ENCODE measurements at regions of chr2 and their contacts with region 1.

Region 1: DNA sequence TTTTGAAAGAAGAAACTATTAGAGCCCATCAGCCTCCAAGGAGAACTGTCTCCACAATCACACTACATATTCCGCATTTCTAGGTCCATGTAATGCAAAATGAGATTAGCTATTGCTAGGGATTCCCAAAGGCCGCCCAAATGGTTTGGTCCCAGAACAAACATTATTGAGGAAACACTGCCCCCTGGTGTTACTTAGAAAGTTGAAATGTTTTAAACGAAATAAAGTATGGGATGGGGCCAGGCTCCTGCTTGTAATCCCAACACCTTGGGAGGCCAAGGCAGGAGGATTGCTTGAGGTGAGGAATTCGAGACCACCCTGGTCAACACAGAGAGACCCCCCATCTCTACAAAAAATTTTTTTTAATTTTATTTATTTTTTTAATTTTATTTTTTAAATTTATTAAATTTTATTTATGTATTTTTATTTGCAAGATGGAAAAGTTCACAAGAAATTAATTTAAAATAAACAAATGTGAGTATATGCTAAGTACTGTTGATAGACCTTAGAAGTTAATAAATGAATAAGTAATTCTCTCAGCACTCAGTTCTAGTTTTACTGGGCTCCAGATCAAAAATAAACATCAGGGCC is 5.5 kb downstream of the NHEJ1 start:
- DNase-seq: no peak
- H3K4me3 ChIP-seq: no peak overlapping the region
- CTCF ChIP-seq: peak; percentile 34

Region 2: DNA sequence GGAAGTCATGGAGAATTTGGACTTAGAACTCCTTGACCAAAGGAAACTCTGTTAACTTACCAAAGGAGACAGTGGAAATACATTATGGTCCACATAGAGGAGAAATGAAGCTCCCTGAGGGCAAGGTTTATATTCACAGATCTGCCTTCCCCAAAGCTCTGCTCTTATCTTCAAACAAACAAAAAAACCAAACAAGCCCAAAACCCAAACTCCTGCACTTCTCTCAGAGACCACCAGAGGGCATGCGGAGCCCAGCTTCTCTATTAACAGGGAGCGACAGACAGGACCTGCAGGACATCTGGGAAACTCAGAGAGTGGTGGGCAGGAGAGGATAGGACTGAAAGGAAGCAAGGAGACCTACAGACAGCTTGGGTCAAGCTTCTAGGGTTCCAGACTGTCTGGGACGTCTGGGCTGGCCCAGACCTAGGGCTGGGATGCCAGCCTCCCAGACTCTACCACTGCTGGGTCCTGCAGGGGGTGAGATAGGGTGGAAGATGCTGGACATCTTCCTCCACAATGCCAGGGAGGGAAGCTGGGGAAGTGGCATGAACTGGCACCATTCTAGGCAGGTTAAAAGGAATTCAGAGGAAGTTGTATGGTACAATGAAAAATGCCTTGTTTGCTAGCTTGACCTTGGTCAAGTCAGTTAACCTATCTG is 278.5 kb before region 1 on chr2:
- CTCF ChIA-PET with region 1: interaction called, 44 read pairs
- POLR2A ChIA-PET with region 1: no interaction called
- DNase-seq: no peak
- H3K4me3 ChIP-seq: no peak overlapping the region
- CTCF ChIP-seq: peak; percentile 86

Region 3: DNA sequence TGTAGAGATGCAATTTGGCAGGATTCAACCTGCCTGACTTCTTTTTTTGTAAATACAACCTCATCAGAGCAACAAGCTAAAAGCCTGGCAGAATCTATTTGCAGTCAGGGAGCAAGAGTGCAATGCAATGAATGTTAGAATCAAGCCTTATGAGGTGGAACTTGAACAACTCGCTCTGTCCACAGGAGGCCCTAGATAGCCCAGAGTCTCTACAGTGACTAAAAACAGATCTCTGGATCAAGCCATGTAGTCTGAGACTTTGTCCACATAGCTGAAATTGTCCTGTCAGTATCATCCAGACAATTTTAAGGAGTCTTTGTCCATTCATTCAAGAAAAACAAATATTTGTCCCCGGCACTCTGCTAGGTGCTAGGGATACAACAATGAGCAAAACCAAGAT is 227.7 kb before region 1 on chr2:
- CTCF ChIA-PET with region 1: no interaction called
- POLR2A ChIA-PET with region 1: no interaction called
- DNase-seq: no peak
- H3K4me3 ChIP-seq: no peak overlapping the region
- CTCF ChIP-seq: no peak

Region 4: GRCh38 chr2:219002395-219003266 is 152.5 kb before region 1 on chr2:
- CTCF ChIA-PET with region 1: interaction called, 135 read pairs
- POLR2A ChIA-PET with region 1: no interaction called
- DNase-seq: no peak
- H3K4me3 ChIP-seq: no peak overlapping the region
- CTCF ChIP-seq: peak; percentile 53

Region 5: DNA sequence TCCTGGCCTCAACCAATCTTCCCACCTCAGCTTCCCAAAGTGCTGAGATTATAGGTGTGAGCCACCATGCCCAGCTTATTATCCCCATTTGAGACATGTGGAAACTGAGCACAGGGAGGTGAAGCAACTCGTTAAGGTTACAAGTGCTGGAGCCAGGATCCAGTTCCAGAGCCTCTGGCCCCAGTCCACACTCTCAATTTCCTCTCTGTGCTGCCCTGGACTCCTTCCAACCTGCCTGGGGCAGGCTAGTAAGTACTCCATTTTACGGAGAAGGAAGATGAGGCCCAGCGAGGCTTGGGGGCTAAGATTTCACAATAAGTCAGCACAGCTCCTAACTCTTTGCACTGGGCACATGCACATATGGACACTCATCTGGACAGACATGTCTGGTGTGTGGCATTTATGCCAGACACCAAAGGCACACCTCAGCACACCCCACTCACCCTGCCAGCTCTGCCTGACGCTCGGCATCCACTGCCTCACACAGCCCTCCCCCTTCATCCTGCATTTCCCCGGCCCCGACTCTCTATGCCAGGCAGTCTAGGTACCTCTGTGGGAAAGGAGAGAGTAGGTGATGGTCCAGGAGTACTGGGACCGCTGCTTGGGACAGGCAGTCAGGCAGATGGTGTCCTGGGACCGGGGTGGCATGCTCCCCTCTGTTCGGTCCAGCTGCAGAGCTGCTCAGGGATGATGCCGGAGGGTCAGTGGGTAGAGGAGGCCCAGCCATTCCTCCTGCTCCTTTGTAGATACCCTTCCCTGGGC is 134.4 kb before region 1 on chr2:
- CTCF ChIA-PET with region 1: interaction called, 366 read pairs
- POLR2A ChIA-PET with region 1: no interaction called
- DNase-seq: no peak
- H3K4me3 ChIP-seq: no peak overlapping the region
- CTCF ChIP-seq: no peak

Region 6: GRCh38 chr2:219125225-219125885 is 29.8 kb before region 1 on chr2:
- CTCF ChIA-PET with region 1: interaction called, 58 read pairs
- POLR2A ChIA-PET with region 1: no interaction called
- DNase-seq: no peak
- H3K4me3 ChIP-seq: no peak overlapping the region
- CTCF ChIP-seq: no peak

Region 7: DNA sequence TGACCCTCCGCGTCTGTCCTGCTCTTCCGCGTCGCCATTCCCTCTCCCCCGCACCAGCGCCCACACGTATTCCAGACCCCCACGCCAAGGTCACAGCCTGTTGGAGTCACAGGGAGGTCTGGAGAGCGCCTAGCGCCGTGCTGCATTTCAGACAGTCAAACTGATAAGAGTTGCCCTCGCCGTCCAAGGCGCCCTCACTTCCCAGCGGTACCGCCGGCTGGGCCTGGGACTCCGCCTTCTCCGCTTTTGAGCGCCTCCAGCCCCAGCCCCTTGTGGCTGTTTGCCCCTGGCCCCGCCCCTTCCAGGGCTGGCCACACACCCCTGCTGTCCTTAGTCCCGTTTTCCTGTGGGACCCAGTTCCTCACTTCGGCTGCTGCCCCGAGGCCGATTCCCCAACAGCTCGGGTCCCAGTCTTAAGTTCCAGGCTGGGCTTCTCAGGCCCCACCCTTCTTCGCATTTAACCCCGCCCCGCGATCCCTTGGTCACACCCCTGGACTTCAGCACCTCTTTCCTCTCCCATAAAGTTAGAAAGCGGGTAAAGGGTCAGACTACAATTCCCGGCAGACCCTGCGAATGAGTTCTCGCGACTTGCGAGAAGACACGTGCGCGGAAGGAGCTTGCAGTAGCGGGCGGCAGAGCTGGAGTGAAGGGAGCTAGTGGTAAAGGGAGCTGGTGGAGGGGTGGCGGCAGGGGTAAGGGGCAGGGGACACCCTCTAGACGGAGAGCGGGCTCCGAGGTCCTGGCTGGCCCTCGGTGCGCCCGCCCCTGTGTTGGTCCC is 343.3 kb after region 1 on chr2 and contains the start of gene GMPPA:
- CTCF ChIA-PET with region 1: no interaction called
- POLR2A ChIA-PET with region 1: no interaction called
- DNase-seq: peak; percentile 95
- H3K4me3 ChIP-seq: peak within 1 kb of the TSS; percentile 75
- CTCF ChIP-seq: peak; percentile 9

Region 8: GRCh38 chr2:219844401-219845091 is 689.4 kb after region 1 on chr2:
- CTCF ChIA-PET with region 1: no interaction called
- POLR2A ChIA-PET with region 1: no interaction called
- DNase-seq: no peak
- H3K4me3 ChIP-seq: no peak overlapping the region
- CTCF ChIP-seq: no peak